ENCODE measurements at regions of chr19 and their contacts with region 1.

Region 1: DNA sequence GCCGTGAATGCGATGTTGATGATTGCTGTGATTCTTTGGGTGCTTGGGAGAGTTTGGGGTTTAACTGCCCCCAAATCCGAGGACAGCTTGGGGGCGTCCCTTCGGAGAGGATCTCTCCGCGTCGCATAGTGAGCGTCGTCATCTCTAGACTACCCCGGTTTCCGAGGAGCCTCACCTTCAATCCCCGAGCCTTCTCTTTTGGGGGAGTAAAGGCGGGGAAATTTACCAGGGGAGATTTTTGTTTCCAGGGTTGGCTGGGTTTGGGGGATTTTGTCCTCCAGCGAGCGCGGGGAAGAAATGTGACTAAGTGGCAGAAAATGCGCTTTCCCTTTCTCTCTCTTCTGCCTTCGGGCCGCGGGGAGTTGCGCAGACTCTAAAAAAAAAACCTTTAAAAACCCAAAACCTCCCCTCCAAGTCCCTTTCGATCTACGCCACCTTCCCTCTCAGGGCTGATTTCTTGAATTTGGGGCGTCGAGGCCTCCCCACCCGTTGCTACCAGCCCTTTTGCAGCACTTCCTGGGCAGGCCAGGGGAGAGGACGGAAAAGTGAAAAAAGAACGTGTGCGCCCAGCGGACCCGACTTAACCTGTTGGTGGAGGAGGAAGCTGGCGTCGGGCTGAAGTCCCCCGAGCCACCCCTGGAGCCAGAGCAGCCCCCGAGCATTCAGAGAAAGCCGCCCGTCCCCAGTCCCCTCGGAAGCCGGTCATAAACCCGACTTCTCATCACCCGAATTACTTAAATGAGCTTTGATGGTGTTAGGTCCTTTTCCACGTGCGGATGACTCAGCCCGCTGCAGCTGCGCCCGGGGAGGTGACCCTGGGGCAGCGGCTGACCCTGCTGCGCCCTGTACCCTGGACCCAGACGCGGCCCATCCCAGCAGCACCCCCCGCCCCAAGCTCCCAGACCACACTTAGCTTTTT is 17.7 kb downstream of the NFIX start:
- DNase-seq: peak; percentile 78
- ATAC-seq: peak; percentile 21
- H3K4me3 ChIP-seq: peak overlapping the region; percentile 75
- H3K27ac ChIP-seq: peak overlapping the region; percentile 81
- H3K4me1 ChIP-seq: peaks cover 48% of the 10 kb centered on the region
- H3K27me3 ChIP-seq: no peaks in the 10 kb centered on the region
- CTCF ChIP-seq: no peak

Region 2: GRCh38 chr19:12995596-12996405 is 17.1 kb before region 1 on chr19:
- CTCF ChIA-PET with region 1: no interaction called
- POLR2A ChIA-PET with region 1: no interaction called
- intact Hi-C with region 1: loop called (anchors 1 kb)
- DNase-seq: no peak
- ATAC-seq: peak; percentile 33
- H3K4me3 ChIP-seq: peak overlapping the region; percentile 98
- H3K27ac ChIP-seq: peak overlapping the region; percentile 14; the same call in 1 of the 2 replicates
- H3K4me1 ChIP-seq: peaks cover 14% of the 10 kb centered on the region
- H3K27me3 ChIP-seq: no peaks in the 10 kb centered on the region
- CTCF ChIP-seq: no peak

Region 3: DNA sequence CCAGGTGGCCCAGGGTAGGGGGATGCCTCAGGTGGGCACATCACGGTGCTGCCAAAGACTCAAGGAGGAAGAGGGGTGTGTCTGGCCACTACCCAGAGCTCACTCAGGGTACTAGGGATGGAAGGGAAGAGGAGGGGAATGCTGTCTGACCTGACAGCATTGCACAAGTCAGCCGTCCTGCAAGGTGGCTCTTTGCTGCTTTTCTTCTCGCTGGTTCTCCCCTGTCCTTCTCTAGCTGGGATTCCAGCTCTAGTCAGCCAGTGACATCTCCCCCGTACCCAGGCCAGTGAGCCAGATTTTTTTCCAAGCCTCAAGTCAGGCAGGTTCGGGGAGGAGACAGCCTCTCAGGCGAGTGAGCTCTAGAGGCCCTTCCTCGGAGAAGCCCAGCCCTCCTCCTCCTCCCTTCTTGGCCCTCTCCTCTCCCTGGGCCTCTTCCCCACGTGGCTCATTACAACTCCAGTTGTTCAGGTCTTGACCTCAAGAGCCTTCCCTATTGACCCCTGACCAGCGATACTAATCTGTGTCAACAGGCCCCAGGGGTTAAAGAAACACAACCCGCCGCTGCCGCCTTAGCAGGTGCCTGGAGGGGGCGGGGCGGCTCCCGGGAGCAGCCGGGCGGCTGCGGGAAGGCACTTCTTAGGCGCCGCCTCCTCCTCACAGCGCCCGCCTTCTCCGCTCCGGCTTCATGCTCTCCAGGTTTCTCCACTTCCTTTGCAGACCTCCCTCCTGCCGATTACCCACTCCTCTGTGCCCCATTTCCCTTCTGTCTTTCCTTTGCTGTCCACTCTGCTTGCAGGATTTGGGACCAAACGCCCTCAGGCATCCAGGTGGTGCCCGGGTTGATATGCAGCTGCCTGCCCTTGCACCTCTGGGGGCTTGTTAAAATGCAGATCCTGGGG is 38.6 kb after region 1 on chr19:
- CTCF ChIA-PET with region 1: interaction called, 4 read pairs
- POLR2A ChIA-PET with region 1: interaction called, 3 read pairs
- intact Hi-C with region 1: loop called (anchors 2 kb)
- DNase-seq: peak; percentile 84
- ATAC-seq: peak; percentile 14
- H3K4me3 ChIP-seq: peak overlapping the region; percentile 43
- H3K27ac ChIP-seq: peak overlapping the region; percentile 99
- H3K4me1 ChIP-seq: peaks cover 65% of the 10 kb centered on the region
- H3K27me3 ChIP-seq: no peaks in the 10 kb centered on the region
- CTCF ChIP-seq: no peak

Measured in PC-3 (cell line).